MCF 10A (cell line): ENCODE measurements at regions of chr20 and their contacts with region 1.

Region 1: DNA sequence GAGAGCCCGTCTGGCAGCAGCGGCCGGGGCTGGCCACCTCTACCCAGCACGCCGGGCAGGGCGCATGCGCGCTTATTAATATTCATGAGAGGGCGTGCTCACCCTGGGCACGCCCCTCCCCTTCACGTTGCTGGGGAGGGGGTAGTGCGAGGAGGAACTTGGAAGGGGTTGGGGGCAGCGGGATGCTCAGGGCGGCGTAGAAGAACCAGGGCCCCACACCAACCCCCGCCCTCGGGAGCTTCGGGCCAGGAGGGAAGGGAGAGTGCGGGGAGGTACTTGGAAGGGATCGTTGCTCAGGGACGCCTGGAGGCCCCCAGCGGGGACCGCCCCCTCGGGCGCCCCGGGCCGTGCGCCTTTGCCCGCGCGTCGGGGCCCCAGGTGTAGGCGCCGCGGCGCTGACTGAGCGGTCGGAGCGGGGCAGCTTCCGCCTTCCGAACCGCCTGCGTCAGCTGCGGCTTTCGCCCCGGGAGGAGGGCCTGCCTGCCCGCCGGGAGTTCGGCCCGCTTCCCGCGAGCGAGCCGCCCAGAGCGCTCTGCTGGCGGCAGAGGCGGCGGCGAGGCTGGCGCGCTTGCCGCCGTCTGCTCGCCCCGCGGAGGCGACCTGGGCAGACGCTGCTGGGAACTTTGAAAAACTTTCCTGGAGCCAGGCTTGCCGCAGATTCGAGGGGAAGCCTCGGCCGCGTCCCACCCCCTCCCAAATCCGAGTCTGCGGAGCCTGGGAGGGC is at the start of gene JAG1:
- DNase-seq: peak; percentile 95
- H3K4me3 Mint-ChIP-seq: peak within 1 kb of the TSS; percentile 98
- H3K27ac Mint-ChIP-seq: peak within 1 kb of the TSS; percentile 91
- H3K4me1 Mint-ChIP-seq: peaks cover 29% of the 10 kb centered on the region
- H3K27me3 Mint-ChIP-seq: no peaks in the 10 kb centered on the region
- CTCF ChIP-seq: no peak
- total RNA-seq, gene JAG1: 62.5 and 88.0 TPM in 2 replicates

Region 2: DNA sequence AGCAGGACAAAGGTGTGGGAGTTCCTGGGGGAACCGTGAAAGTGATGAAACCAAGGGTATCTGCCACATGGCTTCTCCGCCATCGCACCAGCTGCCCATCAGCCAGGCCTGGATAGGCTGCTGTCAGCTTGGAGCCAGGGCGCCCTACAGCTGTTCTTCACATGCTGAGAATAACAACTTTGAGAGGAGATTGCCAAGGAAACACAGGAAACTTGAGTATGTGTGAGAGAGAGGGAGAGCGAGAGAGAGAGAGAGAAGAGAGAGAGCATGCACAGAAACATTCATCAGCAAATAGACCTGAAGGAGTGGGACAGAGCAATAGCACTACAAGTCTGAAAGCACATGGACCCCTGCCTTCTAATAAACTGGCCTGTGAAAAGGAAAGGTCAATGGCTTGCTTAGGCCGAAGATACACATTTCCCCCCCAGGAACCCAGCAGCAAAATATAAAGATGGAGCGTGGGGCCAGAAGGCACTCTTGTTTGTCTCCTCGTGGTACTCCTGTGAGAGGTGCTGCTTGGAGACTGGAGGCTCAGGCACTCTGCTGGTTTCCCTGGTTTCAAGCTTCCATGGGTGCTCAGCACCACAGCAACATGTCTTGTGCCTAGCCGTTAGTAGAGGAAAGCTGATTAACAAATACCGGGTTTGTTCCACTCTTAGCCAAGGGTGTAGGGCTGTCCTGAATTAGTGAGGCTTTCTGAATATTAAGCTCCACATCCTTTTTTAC is 402.5 kb before region 1 on chr20:
- CTCF ChIA-PET with region 1: no interaction called
- POLR2A ChIA-PET with region 1: no interaction called
- intact Hi-C with region 1: no loop called
- DNase-seq: no peak
- H3K4me3 Mint-ChIP-seq: no peak overlapping the region
- H3K27ac Mint-ChIP-seq: no peak overlapping the region
- H3K4me1 Mint-ChIP-seq: no peaks in the 10 kb centered on the region
- H3K27me3 Mint-ChIP-seq: peaks cover 11% of the 10 kb centered on the region
- CTCF ChIP-seq: no peak

Region 3: GRCh38 chr20:10469599-10469998 is 204.6 kb before region 1 on chr20:
- CTCF ChIA-PET with region 1: interaction called, 8 read pairs
- POLR2A ChIA-PET with region 1: no interaction called
- intact Hi-C with region 1: loop called (anchors 1 kb)
- DNase-seq: peak; percentile 81
- H3K4me3 Mint-ChIP-seq: no peak overlapping the region
- H3K27ac Mint-ChIP-seq: peak overlapping the region; percentile 59
- H3K4me1 Mint-ChIP-seq: peaks cover 13% of the 10 kb centered on the region
- H3K27me3 Mint-ChIP-seq: no peaks in the 10 kb centered on the region
- CTCF ChIP-seq: peak; percentile 61

Region 4: DNA sequence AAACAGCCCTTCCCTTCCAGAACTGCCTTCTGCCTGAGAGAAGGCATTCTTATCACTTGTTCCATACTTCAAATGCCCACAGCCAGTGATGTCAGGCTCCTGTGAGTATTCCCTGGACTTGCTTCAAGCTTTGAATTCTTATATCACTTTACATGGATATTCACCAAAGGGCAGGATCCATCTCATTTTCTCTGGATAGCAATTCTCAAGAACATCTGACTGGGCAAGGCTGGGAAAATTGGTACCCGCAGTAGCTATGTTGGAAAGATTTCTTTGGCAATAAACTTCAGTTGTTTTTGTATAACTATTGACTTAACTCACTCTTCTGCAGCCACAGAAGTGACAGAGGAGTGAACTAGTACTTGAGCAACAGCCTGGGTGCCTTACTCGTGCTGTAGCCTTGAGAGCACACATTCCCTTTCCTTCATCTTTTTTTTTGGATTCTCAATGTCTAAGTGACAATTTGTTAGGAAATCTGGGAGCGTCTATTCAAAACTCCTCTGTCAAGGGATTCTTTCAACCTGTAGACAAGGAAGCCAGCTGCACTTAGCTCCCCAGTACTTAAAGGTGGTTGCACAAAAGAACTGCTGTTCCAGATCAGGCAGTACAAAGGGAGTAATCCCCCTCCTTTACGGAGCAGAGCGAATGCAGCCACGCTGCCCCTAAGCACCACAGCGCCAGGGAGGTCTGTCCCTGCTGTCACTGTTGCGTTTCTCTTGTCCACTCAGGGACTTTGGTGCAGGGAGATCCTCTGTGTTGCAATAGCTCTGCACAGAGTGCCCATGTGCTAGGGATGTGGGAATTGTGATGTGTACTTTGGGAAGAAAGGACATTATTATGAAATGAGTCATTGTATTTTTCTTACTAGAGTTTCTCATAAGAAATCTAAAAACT is 69.9 kb before region 1 on chr20:
- CTCF ChIA-PET with region 1: interaction called, 13 read pairs
- POLR2A ChIA-PET with region 1: interaction called, 170 read pairs
- intact Hi-C with region 1: loop called (anchors 2 kb)
- DNase-seq: peak; percentile 94
- H3K4me3 Mint-ChIP-seq: peak overlapping the region; percentile 47
- H3K27ac Mint-ChIP-seq: peak overlapping the region; percentile 87
- H3K4me1 Mint-ChIP-seq: peaks cover 20% of the 10 kb centered on the region
- H3K27me3 Mint-ChIP-seq: no peaks in the 10 kb centered on the region
- CTCF ChIP-seq: no peak

Region 5: GRCh38 chr20:10708351-10709185 is 34.4 kb after region 1 on chr20:
- CTCF ChIA-PET with region 1: no interaction called
- POLR2A ChIA-PET with region 1: interaction called, 19 read pairs
- intact Hi-C with region 1: no loop called
- DNase-seq: peak; percentile 38
- H3K4me3 Mint-ChIP-seq: no peak overlapping the region
- H3K27ac Mint-ChIP-seq: no peak overlapping the region
- H3K4me1 Mint-ChIP-seq: peaks cover 20% of the 10 kb centered on the region
- H3K27me3 Mint-ChIP-seq: no peaks in the 10 kb centered on the region
- CTCF ChIP-seq: no peak

Region 6: GRCh38 chr20:10780901-10781300 is 106.8 kb after region 1 on chr20:
- CTCF ChIA-PET with region 1: no interaction called
- POLR2A ChIA-PET with region 1: no interaction called
- intact Hi-C with region 1: no loop called
- DNase-seq: no peak
- H3K4me3 Mint-ChIP-seq: no peak overlapping the region
- H3K27ac Mint-ChIP-seq: no peak overlapping the region
- H3K4me1 Mint-ChIP-seq: peaks cover 6% of the 10 kb centered on the region
- H3K27me3 Mint-ChIP-seq: no peaks in the 10 kb centered on the region
- CTCF ChIP-seq: no peak

Region 7: GRCh38 chr20:10922941-10923340 is 248.8 kb after region 1 on chr20:
- CTCF ChIA-PET with region 1: interaction called, 4 read pairs
- POLR2A ChIA-PET with region 1: interaction called, 7 read pairs
- intact Hi-C with region 1: loop called (anchors 10 kb)
- DNase-seq: peak; percentile 85
- H3K4me3 Mint-ChIP-seq: peak overlapping the region; percentile 24
- H3K27ac Mint-ChIP-seq: peak overlapping the region; percentile 50
- H3K4me1 Mint-ChIP-seq: peaks cover 46% of the 10 kb centered on the region
- H3K27me3 Mint-ChIP-seq: no peaks in the 10 kb centered on the region
- CTCF ChIP-seq: no peak

Region 8: DNA sequence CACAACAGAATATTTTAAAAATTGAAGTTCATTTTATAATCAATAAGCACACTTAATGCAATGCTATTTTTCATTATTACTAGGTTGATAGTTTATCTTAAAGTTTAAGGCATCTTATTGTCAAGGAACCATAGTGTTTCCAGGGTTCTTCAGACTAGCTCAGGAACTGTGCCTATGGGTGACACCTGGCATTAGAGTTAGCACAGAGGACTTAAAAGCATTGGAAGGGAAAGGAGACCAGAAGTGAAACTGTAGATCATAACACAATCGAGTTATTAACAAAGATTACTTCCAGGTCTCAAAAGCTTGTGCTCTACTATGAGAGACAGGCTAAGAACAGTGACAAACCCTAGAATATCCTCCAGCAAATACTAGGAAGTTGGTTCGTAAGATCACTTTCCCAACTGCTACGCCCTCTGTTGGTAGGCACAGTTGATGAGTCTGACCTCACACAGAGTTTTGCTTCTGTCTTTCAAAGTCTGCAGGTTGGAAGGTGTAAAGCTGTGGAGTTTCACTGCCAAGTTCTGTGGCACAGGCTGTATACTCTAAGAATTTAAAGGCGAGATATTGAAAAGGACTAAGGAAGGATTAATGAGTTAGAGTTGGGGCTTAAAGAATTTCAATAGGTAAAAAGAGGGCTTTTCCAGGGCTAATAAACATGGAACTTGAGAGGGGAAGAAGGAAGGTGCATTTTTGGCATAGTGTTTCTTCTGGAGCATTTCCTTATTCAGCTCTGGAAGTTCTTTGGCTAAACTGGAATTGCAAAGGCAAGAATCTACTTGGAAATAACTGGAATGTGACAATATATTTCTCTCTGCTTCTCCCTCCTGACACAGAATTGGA is 531.0 kb after region 1 on chr20:
- CTCF ChIA-PET with region 1: interaction called, 16 read pairs
- POLR2A ChIA-PET with region 1: interaction called, 50 read pairs
- intact Hi-C with region 1: loop called (anchors 1 kb)
- DNase-seq: peak; percentile 81
- H3K4me3 Mint-ChIP-seq: no peak overlapping the region
- H3K27ac Mint-ChIP-seq: no peak overlapping the region
- H3K4me1 Mint-ChIP-seq: peaks cover 33% of the 10 kb centered on the region
- H3K27me3 Mint-ChIP-seq: no peaks in the 10 kb centered on the region
- CTCF ChIP-seq: peak; percentile 58